ENCODE measurements at regions of chr6 and their contacts with region 1.

Region 1: DNA sequence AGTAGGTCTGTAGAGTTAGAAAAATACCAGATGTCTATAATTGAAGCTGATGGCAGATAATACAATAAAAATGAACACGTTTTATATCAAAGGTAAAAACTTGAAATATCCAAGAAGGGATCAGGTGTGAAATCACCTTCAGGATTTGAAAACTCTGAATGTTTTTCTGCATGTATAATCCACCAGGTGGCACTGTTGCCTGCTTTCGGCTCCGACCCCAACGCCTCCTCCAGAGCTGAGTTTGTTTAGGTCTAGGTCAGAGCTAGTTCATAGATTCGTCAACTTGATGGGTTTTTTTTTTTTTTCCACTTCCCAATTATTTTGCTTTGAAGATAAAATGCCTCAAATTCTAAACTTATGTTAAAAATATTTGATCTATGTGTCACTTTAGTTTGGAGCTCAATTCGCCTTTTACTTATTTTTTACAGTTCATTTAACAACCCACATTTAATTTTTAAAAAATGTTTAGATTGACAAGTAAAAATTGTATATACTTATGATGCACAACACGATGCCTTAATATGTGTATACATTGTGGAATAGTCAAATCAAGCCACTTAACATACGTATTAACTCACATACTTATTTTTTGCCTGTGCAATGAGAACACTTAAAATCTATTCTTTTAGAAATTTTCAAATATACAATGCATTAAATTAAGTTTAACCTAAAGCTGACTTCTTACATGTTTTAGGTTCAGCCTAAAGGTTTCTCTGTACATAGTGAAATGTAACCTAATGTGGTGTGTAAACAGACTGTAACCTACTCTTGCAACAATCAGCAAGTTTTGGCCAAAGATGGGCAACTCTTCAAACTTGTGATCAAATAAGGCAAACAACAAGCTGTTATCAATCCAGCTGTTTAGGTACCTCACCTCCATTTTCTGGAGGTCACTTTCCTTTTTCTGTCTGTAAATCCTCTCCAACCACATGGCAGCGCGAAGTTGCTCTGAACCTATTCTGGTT is 39.4 kb upstream of the ENPP4 start:
- DNase-seq: peak; percentile 57
- H3K4me3 Mint-ChIP-seq: no peak overlapping the region
- H3K27ac Mint-ChIP-seq: no peak overlapping the region
- H3K4me1 Mint-ChIP-seq: no peaks in the 10 kb centered on the region
- H3K27me3 Mint-ChIP-seq: peaks cover 55% of the 10 kb centered on the region
- CTCF ChIP-seq: peak; percentile 62

Region 2: GRCh38 chr6:45930420-45931040 is 159.9 kb before region 1 on chr6:
- CTCF ChIA-PET with region 1: interaction called, 17 read pairs
- POLR2A ChIA-PET with region 1: no interaction called
- intact Hi-C with region 1: loop called (anchors 1 kb)
- DNase-seq: peak; percentile 69
- H3K4me3 Mint-ChIP-seq: no peak overlapping the region
- H3K27ac Mint-ChIP-seq: no peak overlapping the region
- H3K4me1 Mint-ChIP-seq: no peaks in the 10 kb centered on the region
- H3K27me3 Mint-ChIP-seq: peaks cover 26% of the 10 kb centered on the region
- CTCF ChIP-seq: peak; percentile 93

Region 3: GRCh38 chr6:45997875-45998506 is 92.4 kb before region 1 on chr6:
- CTCF ChIA-PET with region 1: no interaction called
- POLR2A ChIA-PET with region 1: no interaction called
- intact Hi-C with region 1: no loop called
- DNase-seq: no peak
- H3K4me3 Mint-ChIP-seq: no peak overlapping the region
- H3K27ac Mint-ChIP-seq: no peak overlapping the region
- H3K4me1 Mint-ChIP-seq: no peaks in the 10 kb centered on the region
- H3K27me3 Mint-ChIP-seq: no peaks in the 10 kb centered on the region
- CTCF ChIP-seq: no peak

Region 4: GRCh38 chr6:46080111-46080510 is 10.3 kb before region 1 on chr6:
- CTCF ChIA-PET with region 1: interaction called, 13 read pairs
- POLR2A ChIA-PET with region 1: no interaction called
- intact Hi-C with region 1: no loop called
- DNase-seq: no peak
- H3K4me3 Mint-ChIP-seq: no peak overlapping the region
- H3K27ac Mint-ChIP-seq: no peak overlapping the region
- H3K4me1 Mint-ChIP-seq: no peaks in the 10 kb centered on the region
- H3K27me3 Mint-ChIP-seq: peaks cover 30% of the 10 kb centered on the region
- CTCF ChIP-seq: no peak

Region 5: DNA sequence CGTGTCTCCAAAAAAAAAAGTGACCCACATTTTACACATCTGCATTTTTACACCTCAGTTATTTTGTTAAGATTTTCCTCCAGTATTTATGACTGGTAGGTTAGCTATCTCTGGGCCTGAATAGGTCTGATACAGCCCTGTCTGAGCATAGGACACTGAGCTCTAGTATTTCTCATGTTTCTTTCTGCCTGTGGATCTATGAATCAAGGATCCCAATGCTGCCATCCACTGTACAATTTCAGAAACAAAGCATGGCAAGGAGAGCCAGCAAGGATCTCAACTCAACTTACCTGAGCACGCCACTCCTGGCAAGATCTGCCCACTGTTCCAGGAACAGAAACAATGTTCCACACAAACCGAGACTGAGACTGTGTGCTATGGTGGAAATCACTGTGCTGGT is 116.8 kb after region 1 on chr6:
- CTCF ChIA-PET with region 1: interaction called, 11 read pairs
- POLR2A ChIA-PET with region 1: no interaction called
- intact Hi-C with region 1: no loop called
- DNase-seq: no peak
- H3K4me3 Mint-ChIP-seq: no peak overlapping the region
- H3K27ac Mint-ChIP-seq: no peak overlapping the region
- H3K4me1 Mint-ChIP-seq: no peaks in the 10 kb centered on the region
- H3K27me3 Mint-ChIP-seq: no peaks in the 10 kb centered on the region
- CTCF ChIP-seq: no peak

Region 6: DNA sequence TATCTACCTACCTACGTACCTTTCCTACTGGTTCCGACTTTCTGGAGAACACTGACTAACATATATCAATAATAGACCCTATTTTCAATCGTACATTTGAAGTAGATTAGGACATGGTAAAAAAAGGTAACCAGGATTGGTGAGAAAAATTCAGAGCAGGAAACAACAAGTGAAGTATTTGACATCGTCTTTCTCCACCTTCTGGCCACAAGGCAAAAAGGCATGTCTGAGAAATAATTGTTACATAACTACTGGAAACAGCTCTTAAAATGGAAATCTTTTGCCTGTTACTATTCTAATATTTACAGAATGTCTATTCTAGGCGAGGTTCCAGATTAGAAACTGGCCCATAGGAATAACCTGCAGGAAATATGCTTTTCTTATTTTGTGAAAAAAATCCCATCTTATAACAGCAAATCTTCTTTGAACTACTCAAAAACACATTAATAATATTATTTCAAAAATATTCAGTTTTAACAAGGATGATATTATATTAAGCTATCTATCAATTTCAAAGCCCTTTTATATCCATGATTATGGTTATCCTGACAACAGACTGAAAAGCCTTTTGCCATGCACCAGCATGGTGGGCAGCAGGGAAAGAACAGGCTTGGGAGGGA is 320.0 kb after region 1 on chr6:
- CTCF ChIA-PET with region 1: interaction called, 40 read pairs
- POLR2A ChIA-PET with region 1: interaction called, 6 read pairs
- intact Hi-C with region 1: loop called (anchors 1 kb)
- DNase-seq: peak; percentile 54
- H3K4me3 Mint-ChIP-seq: no peak overlapping the region
- H3K27ac Mint-ChIP-seq: no peak overlapping the region
- H3K4me1 Mint-ChIP-seq: no peaks in the 10 kb centered on the region
- H3K27me3 Mint-ChIP-seq: peaks cover 8% of the 10 kb centered on the region
- CTCF ChIP-seq: peak; percentile 75

Region 7: GRCh38 chr6:46628976-46629375 is 538.6 kb after region 1 on chr6:
- CTCF ChIA-PET with region 1: no interaction called
- POLR2A ChIA-PET with region 1: no interaction called
- intact Hi-C with region 1: no loop called
- DNase-seq: no peak
- H3K4me3 Mint-ChIP-seq: no peak overlapping the region
- H3K27ac Mint-ChIP-seq: no peak overlapping the region
- H3K4me1 Mint-ChIP-seq: no peaks in the 10 kb centered on the region
- H3K27me3 Mint-ChIP-seq: no peaks in the 10 kb centered on the region
- CTCF ChIP-seq: no peak